Endothelial cell of umbilical vein (primary cell): ENCODE measurements at regions of chr2 and their contacts with region 1.

Region 1: DNA sequence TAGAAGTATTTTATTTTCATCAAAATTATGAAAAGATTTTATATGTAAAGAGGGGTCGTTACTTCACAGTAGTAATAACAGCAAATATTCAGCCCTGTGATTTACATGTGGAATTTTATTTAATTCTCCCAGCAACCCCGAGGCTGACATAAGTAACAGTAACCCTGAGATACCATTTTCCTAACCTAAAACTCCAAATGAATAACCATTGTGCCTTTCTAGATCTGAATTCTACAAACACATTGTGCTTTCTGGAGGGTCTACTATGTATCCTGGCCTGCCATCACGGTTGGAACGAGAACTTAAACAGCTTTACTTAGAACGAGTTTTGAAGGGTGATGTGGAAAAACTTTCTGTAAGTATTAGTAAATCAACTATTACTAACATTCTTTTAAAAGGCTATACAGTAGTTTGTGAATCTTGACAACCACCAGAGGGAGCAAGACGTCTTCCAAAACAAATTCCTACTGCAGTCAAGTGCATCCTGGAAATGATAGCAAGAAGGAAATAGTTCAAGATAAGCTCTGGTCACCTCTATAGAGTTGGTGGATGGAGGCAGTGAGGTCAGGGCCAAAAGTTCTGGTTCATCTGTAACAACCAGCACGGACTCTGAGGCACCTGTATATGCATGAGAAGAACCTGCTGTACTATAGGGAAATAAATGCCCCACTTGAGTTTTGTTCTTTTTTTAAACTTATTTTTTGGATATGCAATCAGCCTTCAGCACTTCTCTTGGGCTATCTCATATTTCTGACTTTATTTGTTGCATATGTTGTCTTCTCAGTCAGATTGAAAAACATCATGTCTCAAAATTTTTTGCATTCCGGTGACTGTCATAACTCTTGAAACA is 37.4 kb downstream of the ACTR2 start:
- DNase-seq: peak; percentile 73
- H3K4me3 ChIP-seq: no peak overlapping the region
- H3K27ac ChIP-seq: no peak overlapping the region
- H3K4me1 ChIP-seq: peaks cover 2% of the 10 kb centered on the region
- H3K27me3 ChIP-seq: no peaks in the 10 kb centered on the region
- CTCF ChIP-seq: peak; percentile 54 to 56
- POLR2A ChIP-seq: no peak

Region 2: GRCh38 chr2:65278531-65278981 is 13.5 kb after region 1 on chr2:
- CTCF ChIA-PET with region 1: interaction called, 20 read pairs
- POLR2A ChIA-PET with region 1: no interaction called
- dilution Hi-C with region 1: no loop called
- intact Hi-C with region 1: loop called (anchors 1 kb)
- DNase-seq: no peak
- H3K4me3 ChIP-seq: no peak overlapping the region
- H3K27ac ChIP-seq: no peak overlapping the region
- H3K4me1 ChIP-seq: peaks cover 16% of the 10 kb centered on the region
- H3K27me3 ChIP-seq: peaks cover 4 to 11% of the 10 kb centered on the region in 2 experiments
- CTCF ChIP-seq: no peak
- POLR2A ChIP-seq: no peak

Region 3: DNA sequence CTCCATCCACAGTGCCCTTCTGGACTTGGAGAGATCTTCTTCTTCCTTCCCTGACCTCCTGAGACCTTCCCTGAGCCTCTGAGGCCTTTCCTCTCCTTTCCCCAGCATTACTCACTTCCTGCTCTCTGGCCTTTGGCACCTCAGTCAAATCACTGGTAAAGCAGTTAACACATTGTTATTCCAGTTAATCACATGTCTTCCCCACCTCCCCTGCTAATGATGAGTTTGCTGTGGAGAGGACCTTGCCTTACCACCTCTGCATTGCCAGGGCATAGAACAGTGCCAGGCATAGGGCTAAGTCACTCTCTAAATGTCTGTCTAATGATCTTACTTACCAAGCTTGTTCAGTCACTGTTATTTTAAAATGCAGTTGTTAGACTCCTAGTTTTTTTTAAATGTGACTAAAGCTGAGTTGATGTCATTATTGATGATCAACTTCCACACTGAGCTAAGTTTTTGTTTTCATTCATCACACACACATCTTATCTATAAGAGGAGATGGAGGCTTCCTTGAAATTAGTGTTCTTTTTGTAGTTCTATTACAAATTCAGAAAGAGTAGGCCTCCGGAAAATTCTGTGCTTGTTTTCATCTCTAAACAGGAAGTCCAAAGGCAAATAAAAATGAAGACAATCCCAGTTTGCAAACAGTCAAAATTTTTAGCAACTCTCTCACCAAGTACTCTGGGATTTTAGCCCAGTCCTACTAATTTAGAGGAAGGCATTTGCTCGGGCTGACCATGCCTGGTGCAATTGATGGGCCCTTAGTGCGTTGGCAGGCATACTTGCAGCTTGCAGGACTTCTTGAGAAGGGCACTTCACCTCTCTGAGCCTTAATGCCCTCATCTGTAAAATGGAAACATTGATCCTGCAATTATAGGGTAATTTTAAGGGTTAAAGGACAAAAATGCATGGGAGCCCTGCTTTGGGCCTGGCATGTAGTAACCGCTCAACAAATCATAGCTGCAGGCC is 281.1 kb after region 1 on chr2:
- CTCF ChIA-PET with region 1: interaction called, 15 read pairs
- POLR2A ChIA-PET with region 1: no interaction called
- dilution Hi-C with region 1: no loop called
- intact Hi-C with region 1: no loop called
- DNase-seq: peak; percentile 68
- H3K4me3 ChIP-seq: no peak overlapping the region
- H3K27ac ChIP-seq: no peak overlapping the region
- H3K4me1 ChIP-seq: peaks cover 11% of the 10 kb centered on the region
- H3K27me3 ChIP-seq: no peaks in the 10 kb centered on the region
- CTCF ChIP-seq: no peak
- POLR2A ChIP-seq: no peak

Region 4: GRCh38 chr2:65554765-65555591 is 289.9 kb after region 1 on chr2:
- CTCF ChIA-PET with region 1: interaction called, 62 read pairs
- POLR2A ChIA-PET with region 1: no interaction called
- dilution Hi-C with region 1: no loop called
- intact Hi-C with region 1: loop called (anchors 1 kb)
- DNase-seq: no peak
- H3K4me3 ChIP-seq: no peak overlapping the region
- H3K27ac ChIP-seq: no peak overlapping the region
- H3K4me1 ChIP-seq: no peaks in the 10 kb centered on the region
- H3K27me3 ChIP-seq: peaks cover 16 to 19% of the 10 kb centered on the region in 2 experiments
- CTCF ChIP-seq: no peak
- POLR2A ChIP-seq: no peak